H1 (cell line): ENCODE measurements at regions of chr2 and their contacts with region 1.

Region 1: DNA sequence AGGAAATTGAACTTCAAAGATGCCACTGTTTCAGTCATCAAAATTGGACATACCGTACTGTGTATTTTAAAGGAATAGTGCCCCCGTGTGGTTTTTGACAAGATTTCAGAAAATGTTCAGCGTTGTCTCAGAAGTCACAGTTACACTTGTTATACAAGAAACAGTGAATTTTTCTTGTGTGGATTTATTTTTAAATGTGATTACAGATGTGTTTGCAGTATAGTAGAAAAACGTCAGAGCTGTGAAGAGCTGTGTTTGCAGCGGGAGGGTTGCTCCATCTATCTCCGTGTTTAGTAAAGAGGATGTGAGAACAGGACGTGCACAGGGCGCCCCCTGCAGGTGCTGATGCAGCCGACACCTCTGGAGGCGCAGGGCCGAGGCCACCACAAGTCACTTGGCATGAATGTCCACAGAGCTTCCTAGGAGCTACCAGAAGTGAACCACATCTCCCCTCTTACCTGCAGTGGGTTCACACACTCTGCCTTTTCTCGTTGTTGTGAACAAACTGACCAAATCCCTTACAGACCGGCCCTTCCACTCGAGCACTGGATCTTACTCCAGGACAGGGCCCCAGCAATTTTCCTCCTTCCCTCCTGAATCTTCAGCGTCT is 73.1 kb downstream of the CACNB4 start:
- DNase-seq: peak; percentile 43 to 93
- H3K4me3 ChIP-seq: peak overlapping the region in 3 of 4 experiments; percentile 1 to 56 (median 8); a peak in 4 of 8 replicates
- H3K27ac ChIP-seq: no peak overlapping the region
- H3K4me1 ChIP-seq: no peaks in the 10 kb centered on the region
- H3K27me3 ChIP-seq: peaks cover 0 to 2% (median under 1%) of the 10 kb centered on the region in 4 experiments; a peak in 1 of 7 replicates
- CTCF ChIP-seq: peak; percentile 96 to 100 (median 97)
- EP300 ChIP-seq: no peak
- POLR2A ChIP-seq: no peak
- RAD21 ChIP-seq: peak; percentile 71 to 76

Region 2: DNA sequence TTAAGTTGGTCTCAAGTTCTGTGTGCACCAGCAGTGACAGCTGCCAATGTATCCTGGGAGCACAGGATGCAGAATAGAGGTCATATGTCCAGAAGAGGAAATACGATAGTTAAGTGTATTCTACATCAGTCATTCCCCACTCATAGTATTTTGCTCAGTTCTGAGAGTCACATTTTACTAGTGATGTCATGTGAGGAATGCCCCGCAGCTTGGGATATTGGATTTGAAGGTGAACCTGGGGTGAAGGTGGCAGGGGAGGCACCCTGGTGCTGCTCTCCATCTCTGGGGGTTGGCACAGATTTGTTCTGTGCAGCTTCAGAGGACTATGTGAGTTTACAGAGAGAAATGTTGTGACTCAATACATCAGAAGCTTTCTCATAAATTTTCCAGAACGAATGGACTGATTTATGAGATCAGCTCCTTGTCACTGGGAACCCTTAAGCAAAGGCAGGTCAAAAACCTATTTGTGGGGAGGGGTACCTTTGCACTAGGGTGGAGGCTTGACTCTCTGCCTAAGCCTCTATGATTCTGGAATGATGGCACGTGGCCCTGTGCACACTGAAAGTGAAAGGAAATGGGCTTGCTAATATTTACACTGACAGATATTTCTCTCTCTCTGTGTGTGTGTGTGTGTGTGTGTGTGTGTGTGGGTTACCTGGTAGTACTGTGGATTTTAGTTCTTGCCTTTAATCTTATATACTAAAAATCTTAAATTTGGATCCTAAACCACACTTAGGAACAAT is 387.4 kb before region 1 on chr2:
- CTCF ChIA-PET with region 1: interaction called, 10 read pairs
- POLR2A ChIA-PET with region 1: no interaction called
- DNase-seq: no peak
- H3K4me3 ChIP-seq: no peak overlapping the region
- H3K27ac ChIP-seq: no peak overlapping the region
- H3K4me1 ChIP-seq: no peaks in the 10 kb centered on the region
- H3K27me3 ChIP-seq: no peaks in the 10 kb centered on the region
- CTCF ChIP-seq: no peak
- EP300 ChIP-seq: no peak
- POLR2A ChIP-seq: no peak
- RAD21 ChIP-seq: no peak

Region 3: DNA sequence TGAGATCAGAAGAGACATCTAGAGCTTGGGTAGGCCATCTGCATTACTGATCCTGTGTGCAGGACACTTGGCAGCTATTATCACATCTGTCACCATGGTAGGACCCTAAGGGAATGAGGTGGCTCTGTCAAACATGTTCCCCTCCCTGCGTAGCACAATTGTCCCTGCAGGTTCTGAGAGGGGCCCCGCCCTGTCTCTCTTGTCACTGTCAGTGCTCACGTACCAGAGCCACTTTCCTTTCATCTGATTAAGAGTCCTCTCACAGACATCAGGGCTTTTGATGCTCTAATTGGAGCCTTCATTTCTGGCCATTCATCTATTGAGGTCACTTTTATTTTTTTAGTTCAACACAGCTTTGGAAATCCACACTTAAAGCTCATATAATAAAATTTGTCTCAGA is 330.0 kb before region 1 on chr2:
- CTCF ChIA-PET with region 1: no interaction called
- POLR2A ChIA-PET with region 1: no interaction called
- DNase-seq: no peak
- H3K4me3 ChIP-seq: no peak overlapping the region
- H3K27ac ChIP-seq: no peak overlapping the region
- H3K4me1 ChIP-seq: no peaks in the 10 kb centered on the region
- H3K27me3 ChIP-seq: no peaks in the 10 kb centered on the region
- CTCF ChIP-seq: no peak
- EP300 ChIP-seq: no peak
- POLR2A ChIP-seq: no peak
- RAD21 ChIP-seq: no peak

Region 4: DNA sequence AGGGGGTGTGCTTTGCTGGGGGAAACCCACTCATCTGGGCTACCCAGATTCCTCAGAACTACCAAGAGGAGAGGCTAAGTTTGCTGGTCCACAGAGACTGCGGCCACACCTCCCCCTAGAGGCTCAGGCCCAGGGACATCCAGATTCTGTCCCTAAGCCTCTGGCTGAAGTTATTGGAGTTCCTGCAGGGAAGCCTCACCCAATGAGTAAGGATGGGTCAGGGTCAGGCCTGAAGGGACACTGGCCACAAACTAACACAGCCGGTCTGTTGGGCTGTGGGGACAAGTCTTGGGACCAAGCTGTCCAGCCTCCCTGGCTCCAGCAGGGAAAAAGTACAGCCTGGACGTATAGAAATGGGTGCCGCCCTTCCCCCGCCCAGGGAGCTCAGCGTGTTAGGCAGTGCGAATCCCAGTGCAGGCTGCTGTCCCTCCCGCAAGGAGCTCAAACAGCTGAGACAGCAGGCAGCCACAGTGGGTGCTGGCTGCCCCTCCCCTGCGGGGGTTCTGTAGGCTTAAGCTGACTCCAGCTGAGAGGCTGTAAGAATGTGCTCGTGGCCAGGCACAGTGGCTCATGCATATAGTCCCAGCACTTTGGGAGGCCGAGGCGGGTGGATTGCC is 110.7 kb before region 1 on chr2:
- CTCF ChIA-PET with region 1: no interaction called
- POLR2A ChIA-PET with region 1: no interaction called
- DNase-seq: no peak
- H3K4me3 ChIP-seq: no peak overlapping the region
- H3K27ac ChIP-seq: no peak overlapping the region
- H3K4me1 ChIP-seq: no peaks in the 10 kb centered on the region; a peak in 1 of 7 replicates
- H3K27me3 ChIP-seq: no peaks in the 10 kb centered on the region
- CTCF ChIP-seq: peak in 2 of 3 experiments; percentile 10 to 13; a peak in 2 of 4 replicates
- EP300 ChIP-seq: no peak
- POLR2A ChIP-seq: no peak
- RAD21 ChIP-seq: peak in 1 of 2 experiments; percentile 16; a peak in 1 of 4 replicates

Region 5: GRCh38 chr2:151967829-151968722 is 57.7 kb before region 1 on chr2:
- CTCF ChIA-PET with region 1: interaction called, 16 read pairs
- POLR2A ChIA-PET with region 1: no interaction called
- DNase-seq: no peak
- H3K4me3 ChIP-seq: no peak overlapping the region
- H3K27ac ChIP-seq: no peak overlapping the region
- H3K4me1 ChIP-seq: peaks cover 0 to 3% (median under 1%) of the 10 kb centered on the region in 4 experiments; a peak in 1 of 7 replicates
- H3K27me3 ChIP-seq: no peaks in the 10 kb centered on the region
- CTCF ChIP-seq: no peak
- EP300 ChIP-seq: no peak
- POLR2A ChIP-seq: no peak
- RAD21 ChIP-seq: no peak

Region 6: GRCh38 chr2:151984424-151985083 is 41.2 kb before region 1 on chr2:
- CTCF ChIA-PET with region 1: interaction called, 14 read pairs
- POLR2A ChIA-PET with region 1: no interaction called
- DNase-seq: no peak
- H3K4me3 ChIP-seq: no peak overlapping the region
- H3K27ac ChIP-seq: no peak overlapping the region
- H3K4me1 ChIP-seq: no peaks in the 10 kb centered on the region
- H3K27me3 ChIP-seq: no peaks in the 10 kb centered on the region
- CTCF ChIP-seq: no peak
- EP300 ChIP-seq: no peak
- POLR2A ChIP-seq: no peak
- RAD21 ChIP-seq: no peak

Region 7: DNA sequence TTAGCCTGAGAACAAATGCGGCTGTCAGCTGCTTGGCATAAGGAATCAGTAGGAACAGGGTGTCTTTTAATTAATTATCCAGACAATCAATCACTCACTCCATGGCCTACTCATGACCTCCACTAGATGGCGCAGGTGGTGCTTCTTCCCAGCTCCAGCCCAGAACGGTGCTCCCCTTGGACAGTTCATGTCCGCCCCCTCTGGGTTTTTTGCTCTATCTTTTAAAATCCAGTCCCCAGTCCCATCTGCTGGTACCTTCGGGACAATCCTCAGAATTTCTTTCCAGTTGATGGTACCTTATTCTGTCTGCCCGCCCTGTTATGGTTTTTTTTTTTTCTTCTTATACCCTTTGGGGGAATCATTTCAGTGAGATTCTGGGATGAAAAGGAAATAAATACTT is 26.7 kb before region 1 on chr2:
- CTCF ChIA-PET with region 1: interaction called, 67 read pairs
- POLR2A ChIA-PET with region 1: no interaction called
- DNase-seq: peak in 1 of 2 experiments; percentile 79
- H3K4me3 ChIP-seq: no peak overlapping the region
- H3K27ac ChIP-seq: no peak overlapping the region
- H3K4me1 ChIP-seq: peaks cover 2 to 11% (median 5%) of the 10 kb centered on the region in 4 experiments; a peak in 5 of 7 replicates
- H3K27me3 ChIP-seq: no peaks in the 10 kb centered on the region
- CTCF ChIP-seq: peak; percentile 88 to 95 (median 92)
- EP300 ChIP-seq: no peak
- POLR2A ChIP-seq: no peak
- RAD21 ChIP-seq: peak; percentile 70 to 76

Region 8: GRCh38 chr2:152036611-152037469 is 11.1 kb after region 1 on chr2:
- CTCF ChIA-PET with region 1: interaction called, 42 read pairs
- POLR2A ChIA-PET with region 1: no interaction called
- DNase-seq: peak; percentile 41 to 66
- H3K4me3 ChIP-seq: no peak overlapping the region
- H3K27ac ChIP-seq: no peak overlapping the region
- H3K4me1 ChIP-seq: peaks cover 6 to 18% (median 13%) of the 10 kb centered on the region in 4 experiments; a peak in 6 of 7 replicates
- H3K27me3 ChIP-seq: peaks cover 0 to 29% (median 14%) of the 10 kb centered on the region in 4 experiments; a peak in 5 of 7 replicates
- CTCF ChIP-seq: peak; percentile 63 to 89 (median 85)
- EP300 ChIP-seq: no peak
- POLR2A ChIP-seq: no peak
- RAD21 ChIP-seq: peak; percentile 96 to 98

Region 9: GRCh38 chr2:152126664-152127063 is 100.9 kb after region 1 on chr2:
- CTCF ChIA-PET with region 1: interaction called, 11 read pairs
- POLR2A ChIA-PET with region 1: no interaction called
- DNase-seq: no peak
- H3K4me3 ChIP-seq: no peak overlapping the region
- H3K27ac ChIP-seq: no peak overlapping the region
- H3K4me1 ChIP-seq: peaks cover 0 to 3% (median 0%) of the 10 kb centered on the region in 4 experiments; a peak in 1 of 7 replicates
- H3K27me3 ChIP-seq: no peaks in the 10 kb centered on the region
- CTCF ChIP-seq: no peak
- EP300 ChIP-seq: no peak
- POLR2A ChIP-seq: no peak
- RAD21 ChIP-seq: no peak